ENCODE measurements at regions of chr17 and their contacts with region 1.

Region 1: GRCh38 chr17:2416010-2416734 is 15.3 kb upstream of the MNT start:
- DNase-seq: peak; percentile 86 to 97 (median 93)
- H3K4me3 ChIP-seq: no peak overlapping the region
- H3K27ac ChIP-seq: peak overlapping the region; percentile 36 to 80 (median 49)
- H3K4me1 ChIP-seq: peaks cover 42 to 57% of the 10 kb centered on the region in 2 donors
- H3K27me3 ChIP-seq: no peaks in the 10 kb centered on the region
- CTCF ChIP-seq: peak; percentile 92 to 98 (median 97)
- POLR2A ChIP-seq: peak in 1 of 2 donors; percentile 23

Region 2: GRCh38 chr17:2034806-2035540 is 381.2 kb before region 1 on chr17:
- intact Hi-C with region 1: no loop called
- DNase-seq: no peak
- H3K4me3 ChIP-seq: no peak overlapping the region
- H3K27ac ChIP-seq: no peak overlapping the region
- H3K4me1 ChIP-seq: peaks cover 0 to 7% of the 10 kb centered on the region in 2 donors
- H3K27me3 ChIP-seq: no peaks in the 10 kb centered on the region
- CTCF ChIP-seq: no peak
- POLR2A ChIP-seq: no peak

Region 3: GRCh38 chr17:2380226-2380922 is 35.8 kb before region 1 on chr17:
- intact Hi-C with region 1: loop called (anchors 1 to 2 kb)
- DNase-seq: no peak
- H3K4me3 ChIP-seq: no peak overlapping the region
- H3K27ac ChIP-seq: peak overlapping the region in 1 of 5 donors; percentile 32
- H3K4me1 ChIP-seq: peaks cover 0 to 20% of the 10 kb centered on the region in 2 donors
- H3K27me3 ChIP-seq: no peaks in the 10 kb centered on the region
- CTCF ChIP-seq: no peak
- POLR2A ChIP-seq: no peak

Region 4: GRCh38 chr17:2390199-2390836 is 25.9 kb before region 1 on chr17:
- intact Hi-C with region 1: loop called in 1 of 2 experiments (anchors 2 kb)
- DNase-seq: peak in 1 of 7 donors; percentile 33
- H3K4me3 ChIP-seq: no peak overlapping the region
- H3K27ac ChIP-seq: peak overlapping the region in 3 of 5 donors; percentile 80 to 99 (median 97)
- H3K4me1 ChIP-seq: peaks cover 23 to 47% of the 10 kb centered on the region in 2 donors
- H3K27me3 ChIP-seq: no peaks in the 10 kb centered on the region
- CTCF ChIP-seq: no peak
- POLR2A ChIP-seq: no peak

Region 5: DNA sequence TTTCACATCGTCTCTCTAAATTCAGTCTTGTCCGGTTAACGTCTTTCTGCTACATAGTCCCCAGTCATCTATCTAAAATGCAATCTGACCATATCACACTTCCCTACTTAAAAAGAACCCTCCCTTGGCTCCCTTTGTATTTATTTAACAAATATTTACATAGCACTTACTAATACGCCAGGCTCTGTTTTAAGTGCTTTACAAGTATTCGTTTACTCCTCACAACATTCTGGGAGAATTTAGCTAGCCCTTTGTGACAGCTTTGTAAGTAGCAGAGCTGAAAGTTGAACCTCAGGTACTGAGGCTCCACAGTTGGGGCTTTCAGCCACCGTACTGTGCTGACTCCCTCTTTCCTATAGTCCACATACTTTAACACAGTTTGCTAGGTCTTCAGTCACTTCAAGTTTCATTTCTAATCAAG is 186.4 kb after region 1 on chr17:
- intact Hi-C with region 1: no loop called
- DNase-seq: no peak
- H3K4me3 ChIP-seq: no peak overlapping the region
- H3K27ac ChIP-seq: no peak overlapping the region
- H3K4me1 ChIP-seq: peaks cover 21 to 57% of the 10 kb centered on the region in 2 donors
- H3K27me3 ChIP-seq: no peaks in the 10 kb centered on the region
- CTCF ChIP-seq: no peak
- POLR2A ChIP-seq: no peak